ENCODE measurements at regions of chr16 and their contacts with region 1.

Region 1: GRCh38 chr16:1763521-1764511 is 7.5 kb downstream of the NME3 start:
- DNase-seq: peak in 23 of 42 donors; percentile 32 to 70 (median 48)

Region 2: GRCh38 chr16:1705688-1706385 is 58.0 kb before region 1 on chr16 and contains the start of gene MAPK8IP3:
- intact Hi-C with region 1: loop called (anchors 10 kb)
- DNase-seq: peak; percentile 72 to 97 (median 93)

Region 3: GRCh38 chr16:1826691-1827575 is 63.1 kb after region 1 on chr16 and contains the starts of genes FAHD1 and HAGH:
- intact Hi-C with region 1: no loop called
- DNase-seq: peak; percentile 88 to 99 (median 96)

Region 4: DNA sequence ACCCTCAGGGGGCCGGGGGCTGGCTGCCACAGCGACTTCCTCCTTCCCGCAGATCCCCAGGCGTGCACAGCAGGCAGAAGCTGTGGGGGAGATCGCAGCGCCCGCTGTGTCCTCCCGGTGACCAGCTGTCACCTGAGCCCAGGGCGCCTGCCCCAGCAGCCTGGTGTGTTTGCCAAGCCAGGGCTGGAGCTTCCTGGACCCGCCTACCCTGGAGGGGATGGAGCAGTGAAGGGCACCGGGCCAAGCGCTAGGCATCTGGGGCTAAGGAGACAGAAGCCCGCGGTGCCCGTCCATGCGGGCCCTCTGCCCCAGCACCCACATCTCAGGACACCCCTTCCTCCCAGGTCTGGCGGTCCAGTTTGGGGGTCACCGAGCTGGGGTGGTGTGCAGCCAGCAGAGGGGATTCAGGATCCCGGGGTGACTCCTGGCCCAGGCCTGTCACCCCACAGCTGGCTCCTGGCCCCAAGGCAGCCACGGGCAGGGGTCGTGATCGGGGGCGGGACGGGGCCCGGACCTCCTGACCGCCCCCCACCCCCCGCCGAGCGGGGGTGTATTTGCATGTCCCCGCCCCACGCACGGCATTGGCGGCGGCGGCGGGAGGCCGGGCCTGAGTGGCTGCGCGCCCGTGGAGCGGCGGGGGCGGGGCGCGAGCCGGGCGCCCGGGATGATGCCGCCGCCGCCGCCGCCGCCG is 384.3 kb after region 1 on chr16 and contains the start of gene RAB26:
- intact Hi-C with region 1: no loop called
- DNase-seq: peak in 41 of 42 donors; percentile 42 to 87 (median 76)